ENCODE measurements at regions of chr5 and their contacts with region 1.

Region 1: DNA sequence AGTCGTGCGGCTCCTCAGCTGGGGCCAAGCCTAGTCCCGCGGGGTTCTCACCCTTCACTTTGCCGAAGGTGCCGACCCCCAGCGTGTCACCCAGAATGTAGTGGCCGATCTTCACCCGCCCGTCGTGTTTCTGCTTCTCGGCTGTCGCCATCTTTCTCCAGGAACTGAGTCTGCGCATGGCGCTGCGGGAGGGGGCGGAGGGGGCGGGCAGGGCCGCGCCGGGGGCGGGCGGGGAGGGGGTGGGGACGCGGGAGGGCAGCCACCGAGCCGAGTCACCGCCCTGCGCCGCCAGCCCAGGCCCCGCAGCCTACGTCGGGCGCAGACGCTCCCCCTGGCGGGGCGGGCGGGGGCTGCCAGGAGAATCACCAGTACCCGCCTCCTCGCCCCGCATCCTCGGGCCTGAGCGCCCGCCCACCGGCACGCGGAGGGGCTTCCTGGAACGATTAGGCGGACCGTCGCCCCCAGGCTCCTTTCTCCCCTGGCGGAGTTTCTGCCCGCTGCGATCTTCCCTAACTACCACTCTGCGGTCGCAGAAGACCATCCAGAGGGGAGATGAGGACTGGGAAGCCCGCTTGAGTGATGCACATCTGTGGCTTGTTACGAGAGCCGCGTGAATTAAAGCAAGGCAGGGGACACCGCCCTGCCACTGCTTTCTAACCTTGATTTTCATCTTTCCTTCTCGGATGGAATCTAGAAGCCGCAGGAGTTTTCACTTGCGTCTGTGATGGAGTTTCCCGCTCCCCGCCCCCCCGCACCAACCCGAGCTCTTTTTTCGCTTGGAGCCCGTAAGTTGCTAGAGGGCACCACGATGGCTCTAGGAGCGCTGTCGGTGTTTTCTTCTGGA is at the start of gene PRKAA1:
- DNase-seq: peak; percentile 90
- H3K4me3 Mint-ChIP-seq: peak within 1 kb of the TSS; percentile 87
- H3K27ac Mint-ChIP-seq: peak within 1 kb of the TSS; percentile 89
- H3K4me1 Mint-ChIP-seq: peaks cover 43% of the 10 kb centered on the region
- H3K27me3 Mint-ChIP-seq: peaks cover 1% of the 10 kb centered on the region
- total RNA-seq, gene PRKAA1: 54.4 to 55.6 TPM

Region 2: DNA sequence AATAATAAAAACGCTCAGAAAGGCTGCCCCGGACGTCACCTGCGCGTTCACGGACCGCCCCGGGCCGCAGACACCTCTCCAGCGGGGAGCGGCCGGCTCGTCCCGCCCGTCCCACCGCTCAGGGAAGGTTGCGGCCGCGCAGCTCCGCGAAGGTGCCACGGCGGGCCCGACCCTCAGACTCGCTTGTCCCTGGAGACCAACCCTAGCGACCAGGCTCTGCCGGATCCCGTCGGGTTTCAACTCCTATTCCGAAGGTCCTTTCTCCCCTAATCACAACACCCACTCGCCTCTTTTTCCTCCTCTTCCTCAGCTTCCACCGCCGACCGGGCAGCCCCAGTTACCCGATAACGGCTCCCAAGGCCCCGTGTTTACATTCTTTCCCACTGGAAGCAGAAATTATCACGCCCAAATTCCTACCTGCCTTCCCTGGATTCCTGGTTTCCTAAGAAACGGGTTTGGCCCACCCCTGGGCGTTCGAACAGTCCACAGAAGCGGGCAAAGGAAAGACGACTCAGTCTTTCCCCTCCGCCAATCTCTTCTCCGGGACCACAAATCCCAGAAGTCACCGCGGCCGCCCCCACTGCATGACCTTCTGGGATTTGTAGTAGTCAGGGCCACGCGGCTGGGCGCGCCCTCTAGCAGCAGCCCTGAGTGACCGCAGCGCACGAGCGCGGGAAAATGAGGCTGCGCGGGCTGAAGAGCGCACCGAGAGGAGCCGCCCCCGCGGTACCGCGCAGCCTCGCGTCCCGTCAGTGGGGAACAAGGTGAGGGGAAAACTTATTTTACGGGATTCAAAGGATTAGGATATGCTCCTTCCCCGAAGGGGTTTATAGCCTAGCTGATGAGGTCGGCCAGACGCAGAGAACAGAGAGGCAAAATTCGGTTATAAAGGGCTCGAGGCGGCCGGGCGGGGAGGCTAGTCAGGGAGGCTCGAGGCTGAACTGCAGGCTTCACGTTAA is 42.5 kb before region 1 on chr5 and contains the start of gene TTC33:
- CTCF ChIA-PET with region 1: interaction called, 3 read pairs
- POLR2A ChIA-PET with region 1: no interaction called
- intact Hi-C with region 1: loop called (anchors 1 kb)
- DNase-seq: peak; percentile 98
- H3K4me3 Mint-ChIP-seq: peak within 1 kb of the TSS; percentile 21
- H3K27ac Mint-ChIP-seq: no peak within 1 kb of the TSS
- H3K4me1 Mint-ChIP-seq: peaks cover 17% of the 10 kb centered on the region
- H3K27me3 Mint-ChIP-seq: no peaks in the 10 kb centered on the region
- total RNA-seq, gene TTC33: 30.2 to 34.1 TPM

Region 3: GRCh38 chr5:40813698-40814281 is 15.6 kb after region 1 on chr5:
- CTCF ChIA-PET with region 1: interaction called, 5 read pairs
- POLR2A ChIA-PET with region 1: interaction called, 12 read pairs
- intact Hi-C with region 1: loop called (anchors 1 kb)
- DNase-seq: peak; percentile 83
- H3K4me3 Mint-ChIP-seq: no peak overlapping the region
- H3K27ac Mint-ChIP-seq: peak overlapping the region; percentile 64
- H3K4me1 Mint-ChIP-seq: peaks cover 9% of the 10 kb centered on the region
- H3K27me3 Mint-ChIP-seq: no peaks in the 10 kb centered on the region